ENCODE measurements at regions of chr12 and their contacts with region 1.

Region 1: DNA sequence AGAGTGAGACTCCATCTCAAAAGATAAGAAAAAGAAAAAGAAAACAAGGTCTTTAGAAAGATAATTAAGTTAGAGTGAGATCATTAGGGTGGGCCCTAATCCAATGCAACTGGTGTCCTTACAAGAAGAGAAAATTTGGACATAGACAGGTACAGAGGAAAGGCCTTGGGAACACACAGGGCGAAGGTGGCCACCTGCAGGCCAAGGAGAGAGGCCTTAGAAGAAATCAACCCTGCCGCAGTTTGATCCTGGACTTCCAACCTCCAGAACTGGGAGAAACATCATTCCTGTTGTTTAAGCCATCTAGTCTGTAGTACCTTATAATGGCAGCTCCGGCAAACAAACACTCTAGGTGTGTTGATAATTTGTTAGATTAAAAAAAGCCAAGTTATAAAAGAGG is 491.9 kb downstream of the MED13L start:
- DNase-seq: no peak
- H3K4me3 ChIP-seq: no peak overlapping the region
- H3K27ac ChIP-seq: no peak overlapping the region
- H3K4me1 ChIP-seq: no peaks in the 10 kb centered on the region
- H3K27me3 ChIP-seq: no peaks in the 10 kb centered on the region
- CTCF ChIP-seq: peak in 1 of 2 donors; percentile 9

Region 2: DNA sequence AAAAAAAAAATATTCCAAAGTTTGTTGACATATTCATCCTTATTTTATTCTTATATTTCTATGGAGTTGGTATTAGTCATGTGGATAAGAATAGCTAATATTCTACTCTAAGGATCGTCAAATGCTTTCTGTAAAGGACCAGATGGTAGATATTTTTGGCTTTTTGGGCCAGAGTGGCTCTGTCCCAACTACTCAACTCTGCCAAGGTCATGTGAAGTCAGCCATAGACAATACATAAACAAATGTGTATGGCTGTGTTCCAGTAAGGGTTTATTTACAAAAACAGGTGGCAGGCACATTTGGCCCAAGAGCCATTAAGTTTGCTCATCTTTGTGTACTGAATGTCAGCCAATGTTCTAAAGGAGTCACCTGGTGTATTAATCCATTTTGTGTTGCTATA is 1511.4 kb before region 1 on chr12:
- CTCF ChIA-PET with region 1: no interaction called
- dilution Hi-C with region 1: no loop called
- in situ Hi-C with region 1: no loop called
- intact Hi-C with region 1: no loop called
- DNase-seq: no peak
- H3K4me3 ChIP-seq: no peak overlapping the region
- H3K27ac ChIP-seq: no peak overlapping the region
- H3K4me1 ChIP-seq: peaks cover 3% of the 10 kb centered on the region
- H3K27me3 ChIP-seq: no peaks in the 10 kb centered on the region
- CTCF ChIP-seq: no peak

Region 3: DNA sequence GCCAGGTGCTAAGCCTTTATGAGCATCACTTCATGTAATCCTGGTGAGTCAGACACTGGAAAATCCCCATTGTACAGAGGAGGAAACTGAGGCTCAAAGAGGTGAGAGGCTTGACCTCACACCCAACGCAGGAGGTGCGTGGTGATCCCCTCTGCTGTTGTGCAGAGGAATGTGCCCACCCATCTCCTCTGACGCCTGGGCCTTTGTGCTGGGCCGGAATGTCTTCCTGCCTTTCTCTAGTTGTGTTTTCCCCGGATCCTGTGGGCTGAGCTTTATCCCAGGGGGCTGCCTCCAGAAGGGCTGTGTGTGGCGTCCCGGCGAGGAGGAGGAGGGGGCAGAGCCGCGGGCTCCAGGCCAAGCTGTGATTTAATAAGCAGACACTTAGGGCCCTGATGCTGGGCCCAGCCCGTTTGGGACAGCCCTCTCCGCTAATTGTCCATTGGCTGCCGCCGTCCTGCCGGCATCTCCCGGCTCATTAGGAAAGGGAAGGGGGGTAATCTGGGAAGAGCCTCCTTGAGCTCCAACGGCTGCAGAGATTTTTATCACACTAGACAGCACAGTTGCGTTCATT is 161.7 kb before region 1 on chr12:
- CTCF ChIA-PET with region 1: no interaction called
- dilution Hi-C with region 1: no loop called
- in situ Hi-C with region 1: no loop called
- intact Hi-C with region 1: no loop called
- DNase-seq: no peak
- H3K4me3 ChIP-seq: no peak overlapping the region
- H3K27ac ChIP-seq: no peak overlapping the region
- H3K4me1 ChIP-seq: no peaks in the 10 kb centered on the region
- H3K27me3 ChIP-seq: no peaks in the 10 kb centered on the region
- CTCF ChIP-seq: no peak

Region 4: DNA sequence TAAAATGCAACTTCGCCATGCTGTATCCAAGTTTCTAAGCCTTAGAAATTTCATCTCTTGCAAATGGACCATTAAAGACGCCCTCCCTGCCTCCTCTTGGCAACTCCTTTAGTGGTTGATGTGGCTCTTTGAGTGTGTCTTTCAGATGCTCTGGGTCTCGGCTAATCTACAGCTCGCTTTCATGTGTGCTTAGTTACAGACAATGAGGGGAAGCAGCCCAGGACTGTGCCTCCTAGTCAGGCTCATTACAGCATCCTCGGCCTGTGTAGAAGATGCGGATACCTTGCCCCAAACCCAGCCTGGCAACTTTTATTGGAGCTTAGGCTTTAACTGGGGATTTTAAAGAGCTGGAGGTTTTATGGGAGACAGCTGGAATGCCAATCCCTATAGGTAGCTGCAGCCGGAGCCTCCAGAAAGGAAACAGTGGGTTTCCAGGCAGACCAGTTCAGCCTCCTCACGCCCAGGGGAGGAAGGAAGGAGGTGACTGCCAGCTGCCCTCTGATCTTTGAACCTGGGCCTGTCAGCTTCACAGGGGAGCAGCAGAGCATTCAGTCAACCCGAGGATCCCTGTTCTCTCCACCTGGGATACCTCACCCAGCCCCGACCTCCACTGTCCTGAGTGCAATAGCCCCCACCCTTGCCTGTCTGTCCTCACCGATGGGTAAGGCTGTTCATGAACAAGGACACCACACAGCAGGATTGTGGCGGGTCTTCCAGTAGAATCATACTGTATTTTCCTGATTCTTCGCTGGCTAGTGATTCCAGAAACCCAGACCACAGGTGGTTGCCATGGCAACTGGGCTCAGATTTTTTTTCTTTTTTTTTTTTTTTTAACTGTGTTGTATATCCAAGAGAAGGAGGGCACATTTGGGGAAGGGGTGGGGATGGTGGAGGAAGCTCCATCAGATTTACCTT is 146.6 kb before region 1 on chr12:
- CTCF ChIA-PET with region 1: no interaction called
- dilution Hi-C with region 1: no loop called
- in situ Hi-C with region 1: no loop called
- intact Hi-C with region 1: no loop called
- DNase-seq: no peak
- H3K4me3 ChIP-seq: no peak overlapping the region
- H3K27ac ChIP-seq: no peak overlapping the region
- H3K4me1 ChIP-seq: no peaks in the 10 kb centered on the region
- H3K27me3 ChIP-seq: no peaks in the 10 kb centered on the region
- CTCF ChIP-seq: no peak

Region 5: DNA sequence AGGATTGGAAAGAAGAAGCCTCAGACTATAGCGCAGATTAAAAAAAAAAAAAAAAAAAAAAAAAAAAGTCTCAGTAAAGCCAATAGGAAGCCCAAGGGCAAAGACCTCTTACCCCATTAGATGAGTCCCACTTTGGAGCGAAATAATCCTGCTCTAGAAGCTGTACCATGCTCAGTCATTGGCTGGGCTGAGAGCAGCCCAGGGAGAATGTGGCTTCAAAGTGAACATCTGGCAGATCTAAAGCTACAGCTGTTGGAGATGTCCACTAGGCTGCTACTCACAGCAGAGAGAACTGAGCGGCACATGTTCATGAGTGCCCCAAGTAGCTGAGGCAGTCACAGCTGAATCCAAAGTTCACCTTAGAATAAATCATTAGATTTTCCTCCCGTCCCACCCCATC is 69.0 kb before region 1 on chr12:
- CTCF ChIA-PET with region 1: no interaction called
- dilution Hi-C with region 1: no loop called
- in situ Hi-C with region 1: no loop called
- intact Hi-C with region 1: no loop called
- DNase-seq: no peak
- H3K4me3 ChIP-seq: no peak overlapping the region
- H3K27ac ChIP-seq: no peak overlapping the region
- H3K4me1 ChIP-seq: no peaks in the 10 kb centered on the region
- H3K27me3 ChIP-seq: no peaks in the 10 kb centered on the region
- CTCF ChIP-seq: no peak

Region 6: DNA sequence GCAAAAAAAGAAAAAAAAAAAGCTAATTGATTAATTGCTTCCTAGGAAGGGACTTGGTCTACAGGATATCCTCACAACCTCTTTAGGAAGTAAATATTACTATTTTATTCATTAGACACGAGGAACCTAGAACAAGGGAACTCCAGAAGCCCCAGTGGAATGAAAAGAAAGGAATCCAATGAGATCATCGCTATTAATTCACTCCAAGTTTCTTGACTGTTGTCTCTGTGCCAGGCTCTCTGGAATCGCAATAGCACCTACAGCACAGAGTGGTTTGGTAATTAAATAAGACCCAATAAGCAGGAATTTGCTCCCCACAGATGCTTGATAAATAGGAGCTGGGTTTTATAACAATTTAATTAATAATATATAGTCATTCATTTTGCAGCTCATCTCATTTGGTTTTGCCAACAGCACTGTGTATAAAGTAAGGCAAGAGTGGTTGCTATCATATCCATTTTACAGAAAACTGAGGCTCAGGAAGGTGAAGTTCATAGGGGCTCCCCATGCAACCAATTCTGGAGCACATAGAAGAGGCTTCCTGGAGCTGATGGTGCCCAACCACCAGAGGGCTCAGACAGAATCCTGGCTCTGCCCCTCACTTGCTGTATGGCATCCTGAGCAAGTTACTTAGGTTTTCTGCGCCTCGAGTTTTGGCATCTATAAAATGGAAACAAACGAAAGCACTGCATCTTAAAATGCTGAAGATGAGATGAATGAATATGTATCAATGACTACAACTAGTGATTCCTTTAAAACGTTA is 71.8 kb after region 1 on chr12:
- CTCF ChIA-PET with region 1: no interaction called
- dilution Hi-C with region 1: loop called (anchors 5 kb)
- in situ Hi-C with region 1: no loop called
- intact Hi-C with region 1: no loop called
- DNase-seq: no peak
- H3K4me3 ChIP-seq: no peak overlapping the region
- H3K27ac ChIP-seq: no peak overlapping the region
- H3K4me1 ChIP-seq: no peaks in the 10 kb centered on the region
- H3K27me3 ChIP-seq: no peaks in the 10 kb centered on the region
- CTCF ChIP-seq: peak in 1 of 2 donors; percentile 11

Measured in mammary epithelial cell (primary cell).